ENCODE measurements at regions of chr12 and their contacts with region 1.

Region 1: GRCh38 chr12:4203772-4204376 is 69.7 kb upstream of the CCND2 start:
- DNase-seq: peak in 1 of 2 experiments; percentile 38
- H3K4me3 ChIP-seq: peak overlapping the region in 3 of 4 experiments; percentile 1 to 49 (median 11); a peak in 3 of 8 replicates
- H3K27ac ChIP-seq: peak overlapping the region; percentile 1; the same call in 1 of the 2 replicates
- H3K4me1 ChIP-seq: peaks cover 2 to 34% (median 24%) of the 10 kb centered on the region in 4 experiments; a peak in 6 of 7 replicates
- H3K27me3 ChIP-seq: no peaks in the 10 kb centered on the region
- CTCF ChIP-seq: no peak
- EP300 ChIP-seq: no peak
- POLR2A ChIP-seq: peak in 1 of 2 experiments; percentile 57; a peak in 1 of 3 replicates
- RAD21 ChIP-seq: no peak; a peak in 1 of 4 replicates

Region 2: DNA sequence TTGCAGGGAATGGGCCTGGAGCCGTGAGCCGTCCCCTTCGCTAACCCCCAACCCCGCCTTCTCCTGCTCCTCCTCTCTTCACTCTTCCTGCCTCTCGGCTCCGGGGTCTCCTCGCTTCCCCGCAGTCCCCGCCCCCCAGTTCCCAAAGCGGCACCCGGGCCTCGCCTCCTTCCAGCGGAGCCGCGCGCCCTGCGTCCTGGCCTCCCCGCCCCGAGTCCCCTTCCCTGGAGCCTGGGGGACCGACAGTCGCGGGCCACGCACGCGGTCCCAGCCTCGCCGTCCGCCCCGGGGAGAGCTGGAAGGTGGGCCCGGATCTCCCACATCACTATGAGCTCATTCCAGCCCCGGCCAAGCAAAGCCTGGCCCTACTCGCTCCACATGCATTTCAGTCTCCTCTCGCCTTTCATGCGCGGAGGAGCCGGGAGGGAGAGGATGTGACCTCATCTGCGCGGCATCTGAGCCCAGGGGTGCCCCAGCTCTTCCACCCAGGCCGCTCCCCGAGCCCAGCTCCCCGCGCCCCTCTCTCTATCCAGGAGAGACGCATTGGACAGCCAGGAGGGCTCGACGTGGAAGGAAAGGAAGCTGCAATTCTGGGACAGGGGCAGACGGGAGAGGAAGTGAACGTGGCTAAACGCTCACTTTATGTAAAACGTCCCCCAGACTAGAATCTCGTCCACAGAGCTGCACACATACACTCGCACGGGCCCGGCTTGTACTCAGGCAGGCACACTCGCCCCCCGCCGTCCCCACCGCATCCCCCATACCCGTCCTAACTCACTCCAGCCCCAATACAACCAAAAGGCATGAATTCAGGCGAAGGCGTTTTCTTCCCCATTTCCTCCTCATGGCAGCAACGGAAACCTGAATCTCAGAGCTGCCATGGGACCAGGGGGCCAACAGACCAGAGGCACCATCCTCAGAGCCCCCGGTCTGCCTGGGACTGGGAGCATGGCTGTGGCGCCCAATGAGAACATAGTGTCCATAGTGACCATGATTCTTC is 39.0 kb before region 1 on chr12:
- CTCF ChIA-PET with region 1: no interaction called
- POLR2A ChIA-PET with region 1: interaction called, 11 read pairs
- DNase-seq: peak; percentile 51 to 78
- H3K4me3 ChIP-seq: peak overlapping the region; percentile 44 to 65 (median 49)
- H3K27ac ChIP-seq: peak overlapping the region; percentile 73; the same call in 1 of the 2 replicates
- H3K4me1 ChIP-seq: peaks cover 4 to 18% (median 10%) of the 10 kb centered on the region in 4 experiments
- H3K27me3 ChIP-seq: peaks cover 0 to 7% (median 5%) of the 10 kb centered on the region in 4 experiments; a peak in 4 of 7 replicates
- CTCF ChIP-seq: no peak
- EP300 ChIP-seq: no peak
- POLR2A ChIP-seq: peak in 1 of 2 experiments; percentile 59; a peak in 1 of 3 replicates
- RAD21 ChIP-seq: no peak

Region 3: GRCh38 chr12:4193821-4194220 is 10.1 kb before region 1 on chr12:
- CTCF ChIA-PET with region 1: interaction called, 4 read pairs
- POLR2A ChIA-PET with region 1: interaction called, 10 read pairs
- DNase-seq: no peak
- H3K4me3 ChIP-seq: no peak overlapping the region
- H3K27ac ChIP-seq: no peak overlapping the region
- H3K4me1 ChIP-seq: peaks cover 0 to 10% (median 4%) of the 10 kb centered on the region in 4 experiments; a peak in 5 of 7 replicates
- H3K27me3 ChIP-seq: no peaks in the 10 kb centered on the region
- CTCF ChIP-seq: no peak
- EP300 ChIP-seq: no peak
- POLR2A ChIP-seq: no peak
- RAD21 ChIP-seq: no peak

Region 4: GRCh38 chr12:4215229-4216186 is 11.6 kb after region 1 on chr12:
- CTCF ChIA-PET with region 1: interaction called, 7 read pairs
- POLR2A ChIA-PET with region 1: interaction called, 15 read pairs
- DNase-seq: peak in 1 of 2 experiments; percentile 40
- H3K4me3 ChIP-seq: no peak overlapping the region
- H3K27ac ChIP-seq: no peak overlapping the region
- H3K4me1 ChIP-seq: no peaks in the 10 kb centered on the region; a peak in 1 of 7 replicates
- H3K27me3 ChIP-seq: no peaks in the 10 kb centered on the region; a peak in 1 of 7 replicates
- CTCF ChIP-seq: no peak
- EP300 ChIP-seq: no peak
- POLR2A ChIP-seq: no peak
- RAD21 ChIP-seq: no peak

Region 5: DNA sequence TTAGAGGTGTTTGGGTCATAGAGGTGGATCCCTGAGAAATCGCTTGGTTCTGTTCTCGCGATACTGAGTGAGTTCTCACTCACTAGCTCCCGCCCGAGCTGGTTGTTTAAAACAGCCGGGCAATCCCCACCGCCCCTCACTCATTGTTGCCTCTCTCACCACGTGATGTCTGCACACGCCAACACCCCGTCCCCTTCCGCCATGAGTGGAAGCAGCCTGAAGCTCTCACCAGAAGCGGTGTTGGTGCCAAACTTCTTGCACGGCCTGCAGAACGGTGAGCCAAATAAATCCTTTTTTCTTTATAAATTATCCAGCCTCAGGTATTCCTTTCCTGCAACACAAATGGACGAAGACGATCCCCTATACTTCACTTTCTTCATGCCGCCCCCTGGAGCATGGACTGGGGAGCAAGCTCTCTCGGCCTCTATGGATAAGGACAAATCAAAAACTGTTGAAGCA is 24.3 kb after region 1 on chr12:
- CTCF ChIA-PET with region 1: interaction called, 4 read pairs
- POLR2A ChIA-PET with region 1: interaction called, 19 read pairs
- DNase-seq: peak; percentile 29 to 73
- H3K4me3 ChIP-seq: peak overlapping the region; percentile 23 to 67 (median 46); a peak in 6 of 8 replicates
- H3K27ac ChIP-seq: no peak overlapping the region
- H3K4me1 ChIP-seq: no peaks in the 10 kb centered on the region; a peak in 3 of 7 replicates
- H3K27me3 ChIP-seq: no peaks in the 10 kb centered on the region
- CTCF ChIP-seq: peak; percentile 34 to 48 (median 48)
- EP300 ChIP-seq: no peak
- POLR2A ChIP-seq: peak in 1 of 2 experiments; percentile 66; a peak in 1 of 3 replicates
- RAD21 ChIP-seq: peak; percentile 35 to 59

Region 6: DNA sequence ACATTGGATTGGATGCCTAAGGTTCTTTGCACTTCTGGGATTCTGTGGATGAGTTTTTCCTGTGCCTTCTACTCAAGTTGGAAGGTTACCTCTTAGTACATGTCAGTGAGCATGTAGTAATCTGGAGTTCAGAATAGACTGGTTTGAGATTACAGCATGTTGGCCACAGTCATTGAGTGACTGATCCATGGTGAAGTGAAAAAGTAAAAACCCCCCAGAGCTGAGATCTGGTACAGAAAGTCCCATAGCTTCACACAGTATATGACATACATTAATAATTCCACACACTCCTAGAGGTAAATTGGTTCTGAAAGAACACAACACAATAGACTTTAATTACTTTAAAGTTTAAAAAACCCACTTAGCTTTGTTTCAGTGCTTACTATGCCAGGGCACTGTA is 57.8 kb after region 1 on chr12:
- CTCF ChIA-PET with region 1: no interaction called
- POLR2A ChIA-PET with region 1: no interaction called
- DNase-seq: no peak
- H3K4me3 ChIP-seq: no peak overlapping the region
- H3K27ac ChIP-seq: no peak overlapping the region
- H3K4me1 ChIP-seq: no peaks in the 10 kb centered on the region
- H3K27me3 ChIP-seq: peaks cover 0 to 1% (median 0%) of the 10 kb centered on the region in 4 experiments; a peak in 1 of 7 replicates
- CTCF ChIP-seq: no peak
- EP300 ChIP-seq: no peak
- POLR2A ChIP-seq: no peak
- RAD21 ChIP-seq: no peak